ENCODE measurements at regions of chr5 and their contacts with region 1.

Region 1: GRCh38 chr5:157130925-157131324 is 11.7 kb downstream of the MED7 start:
- H3K4me3 ChIP-seq: no peak overlapping the region
- H3K27ac ChIP-seq: no peak overlapping the region
- H3K4me1 ChIP-seq: no peaks in the 10 kb centered on the region
- CTCF ChIP-seq: no peak

Region 2: GRCh38 chr5:155943516-155944407 is 1187.2 kb before region 1 on chr5:
- CTCF ChIA-PET with region 1: interaction called, 17 read pairs
- POLR2A ChIA-PET with region 1: no interaction called
- H3K4me3 ChIP-seq: no peak overlapping the region
- H3K27ac ChIP-seq: no peak overlapping the region
- H3K4me1 ChIP-seq: no peaks in the 10 kb centered on the region
- CTCF ChIP-seq: peak; percentile 24; the same call in 1 of the 2 replicates

Region 3: DNA sequence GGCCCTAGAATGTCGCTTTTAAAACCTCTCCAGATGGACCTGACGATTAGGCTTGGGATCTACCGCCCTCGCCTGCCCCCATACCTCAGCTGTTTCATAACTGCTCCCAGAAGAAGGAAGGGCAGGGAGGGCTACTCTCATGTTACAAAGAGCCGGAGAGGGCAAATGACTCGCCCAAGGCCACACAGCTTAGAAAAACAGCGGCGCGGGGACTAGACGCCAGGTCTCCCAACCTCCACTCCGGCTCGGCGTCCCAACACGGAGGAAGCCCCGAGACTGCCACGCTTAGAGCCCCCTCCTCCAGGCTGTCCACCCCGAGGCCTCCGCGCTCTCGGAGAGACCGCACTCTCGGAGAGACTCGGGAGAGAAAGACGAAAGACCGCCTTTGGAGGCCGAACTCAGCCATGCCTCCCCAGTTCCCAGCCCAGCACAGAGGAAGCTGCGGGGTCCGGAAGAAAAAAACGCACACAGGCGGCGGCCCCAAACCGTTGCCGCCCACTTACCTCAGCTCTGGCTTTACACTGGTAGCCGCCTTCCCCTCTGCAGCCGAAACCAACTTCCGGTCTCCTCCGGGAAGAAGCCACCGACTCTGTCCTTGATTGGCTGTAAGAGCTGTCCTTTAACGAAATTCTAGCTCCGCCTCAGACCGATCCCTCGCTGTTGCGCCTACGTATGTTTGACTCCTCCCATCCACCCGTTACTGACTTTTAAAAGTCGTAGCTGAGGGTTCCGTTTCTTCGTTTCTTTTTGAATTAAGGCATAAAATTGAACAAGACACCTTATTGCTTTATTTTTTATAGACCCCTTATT is 11.6 kb after region 1 on chr5 and contains the start of gene MED7:
- CTCF ChIA-PET with region 1: interaction called, 19 read pairs
- POLR2A ChIA-PET with region 1: interaction called, 20 read pairs
- H3K4me3 ChIP-seq: peak within 1 kb of the TSS; percentile 90
- H3K27ac ChIP-seq: peak within 1 kb of the TSS; percentile 42; the same call in 1 of the 2 replicates
- H3K4me1 ChIP-seq: no peaks in the 10 kb centered on the region
- CTCF ChIP-seq: no peak

Region 4: DNA sequence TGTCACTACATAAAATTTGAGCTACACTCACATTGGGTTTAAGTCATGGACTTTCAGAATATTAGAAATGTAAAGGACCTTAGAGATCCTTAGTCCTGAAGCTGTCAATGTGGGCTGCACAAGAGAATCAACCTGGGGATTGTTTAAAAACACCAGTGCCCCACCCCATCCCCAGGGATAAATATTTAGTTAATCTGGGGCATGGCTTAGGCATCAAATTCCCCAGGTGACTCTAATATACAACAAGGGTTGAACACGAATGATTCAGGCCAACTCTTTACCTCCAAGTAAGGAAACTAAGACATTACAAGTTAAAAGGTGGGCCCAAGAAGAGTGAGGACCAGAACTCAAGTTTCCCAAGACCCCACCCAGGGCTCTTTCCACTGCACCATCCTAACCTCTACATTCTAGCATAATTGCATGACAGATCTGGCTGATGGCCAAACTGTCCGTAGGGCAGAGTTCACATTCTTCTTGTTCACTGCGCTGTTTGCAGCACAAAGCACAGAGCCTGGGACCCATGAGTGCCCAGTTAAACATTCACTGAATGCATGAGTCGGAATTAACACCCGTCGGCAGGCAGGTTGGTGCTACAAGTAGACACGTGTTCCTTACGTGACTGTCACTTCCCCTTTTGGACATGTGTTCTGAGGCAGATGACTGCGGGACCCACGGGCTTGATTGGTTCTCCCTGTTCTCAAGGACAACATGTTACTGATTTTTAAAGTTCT is 160.2 kb after region 1 on chr5:
- CTCF ChIA-PET with region 1: no interaction called
- POLR2A ChIA-PET with region 1: no interaction called
- H3K4me3 ChIP-seq: no peak overlapping the region
- H3K27ac ChIP-seq: no peak overlapping the region
- H3K4me1 ChIP-seq: no peaks in the 10 kb centered on the region
- CTCF ChIP-seq: no peak

Measured in HEK293 (cell line).